ENCODE measurements at regions of chr5 and their contacts with region 1.

Region 1: DNA sequence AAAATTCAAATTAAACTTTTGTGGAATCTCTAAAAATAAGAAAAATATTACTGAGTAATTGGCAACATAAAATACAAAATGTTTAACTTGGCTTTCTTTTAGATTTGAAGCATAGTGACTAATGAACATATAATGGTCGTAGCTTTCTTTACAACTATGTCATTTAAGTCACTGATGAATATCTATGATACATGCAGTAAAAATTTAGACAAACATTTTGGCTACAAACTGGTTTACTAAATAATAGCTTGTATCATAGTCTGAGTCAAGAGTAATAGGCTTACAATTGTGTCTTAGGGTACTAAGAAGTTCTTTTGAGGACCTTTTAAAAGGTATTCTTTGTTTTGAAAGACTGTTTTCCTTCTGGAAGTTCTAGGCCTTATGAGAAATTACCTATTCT is 2.0 kb upstream of the APC start:
- DNase-seq: peak; percentile 43
- ATAC-seq: peak; percentile 49
- H3K4me3 ChIP-seq: no peak overlapping the region
- H3K27ac ChIP-seq: no peak overlapping the region
- H3K4me1 ChIP-seq: no peaks in the 10 kb centered on the region; the same call in 1 of the 2 replicates
- H3K27me3 ChIP-seq: no peaks in the 10 kb centered on the region
- CTCF ChIP-seq: no peak

Region 2: DNA sequence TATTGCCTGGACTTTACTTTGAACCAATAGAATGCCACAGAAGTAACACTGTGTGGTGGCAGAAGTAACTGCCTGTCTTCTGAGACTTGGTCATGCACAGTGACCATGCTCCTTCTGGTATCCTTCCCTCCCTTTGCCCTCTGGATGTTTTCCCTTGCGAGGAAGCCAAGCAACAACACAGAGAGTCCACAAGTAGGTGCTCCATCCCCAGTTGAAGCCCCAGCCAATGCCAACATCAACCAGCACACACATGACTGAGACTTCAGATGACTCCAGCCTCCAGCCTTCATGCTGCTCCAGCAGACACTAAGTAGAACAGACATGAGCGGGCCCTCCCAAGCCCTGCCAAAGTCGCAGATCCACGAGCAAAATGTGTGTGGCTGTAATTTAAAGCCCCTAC is 446.2 kb before region 1 on chr5:
- CTCF ChIA-PET with region 1: no interaction called
- POLR2A ChIA-PET with region 1: no interaction called
- in situ Hi-C with region 1: no loop called
- intact Hi-C with region 1: no loop called
- DNase-seq: no peak
- ATAC-seq: no peak
- H3K4me3 ChIP-seq: no peak overlapping the region
- H3K27ac ChIP-seq: no peak overlapping the region
- H3K4me1 ChIP-seq: no peaks in the 10 kb centered on the region
- H3K27me3 ChIP-seq: no peaks in the 10 kb centered on the region
- CTCF ChIP-seq: no peak

Region 3: DNA sequence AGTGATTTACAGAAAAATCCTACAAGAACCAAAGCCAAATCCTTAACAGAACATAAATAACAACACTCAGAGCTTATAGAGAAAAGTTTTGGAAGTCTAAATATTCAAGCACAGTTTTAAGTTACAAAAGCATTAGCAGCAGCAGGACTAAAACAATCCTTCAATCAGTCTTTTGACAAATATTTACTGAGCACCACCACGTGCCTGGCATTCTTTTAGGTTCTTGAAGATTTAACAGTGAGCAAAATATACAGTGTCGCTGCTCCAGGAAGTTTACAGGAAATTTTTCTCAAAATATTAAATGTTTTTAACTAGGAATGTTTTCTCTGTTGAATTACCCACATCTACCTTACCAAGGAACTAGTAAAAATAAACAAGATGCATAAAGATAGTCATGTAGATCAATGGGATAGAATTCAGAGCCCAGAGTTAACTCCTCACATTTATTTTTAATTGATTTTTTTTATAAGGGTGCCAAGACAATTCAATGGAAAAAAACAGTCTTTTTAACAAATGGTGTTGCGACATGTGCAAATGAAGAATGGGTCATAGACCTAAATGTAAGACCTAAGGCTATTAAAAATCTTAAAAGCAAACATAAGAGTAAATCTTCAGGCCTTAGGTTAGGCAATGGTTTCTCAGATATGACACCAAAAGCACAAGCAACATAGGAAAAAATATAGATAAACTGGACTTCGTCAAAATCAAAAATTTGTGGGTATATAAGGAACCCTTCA is 327.9 kb before region 1 on chr5:
- CTCF ChIA-PET with region 1: no interaction called
- POLR2A ChIA-PET with region 1: no interaction called
- in situ Hi-C with region 1: no loop called
- intact Hi-C with region 1: no loop called
- DNase-seq: no peak
- ATAC-seq: no peak
- H3K4me3 ChIP-seq: no peak overlapping the region
- H3K27ac ChIP-seq: no peak overlapping the region
- H3K4me1 ChIP-seq: no peaks in the 10 kb centered on the region
- H3K27me3 ChIP-seq: peaks cover 5% of the 10 kb centered on the region; the same call in 1 of the 2 replicates
- CTCF ChIP-seq: no peak

Region 4: GRCh38 chr5:112772124-112772523 is 36.4 kb after region 1 on chr5:
- CTCF ChIA-PET with region 1: no interaction called
- POLR2A ChIA-PET with region 1: interaction called, 10 read pairs
- in situ Hi-C with region 1: no loop called
- intact Hi-C with region 1: no loop called
- DNase-seq: no peak
- ATAC-seq: no peak
- H3K4me3 ChIP-seq: no peak overlapping the region
- H3K27ac ChIP-seq: no peak overlapping the region
- H3K4me1 ChIP-seq: no peaks in the 10 kb centered on the region
- H3K27me3 ChIP-seq: no peaks in the 10 kb centered on the region
- CTCF ChIP-seq: no peak